ENCODE measurements at regions of chr20 and their contacts with region 1.

Region 1: DNA sequence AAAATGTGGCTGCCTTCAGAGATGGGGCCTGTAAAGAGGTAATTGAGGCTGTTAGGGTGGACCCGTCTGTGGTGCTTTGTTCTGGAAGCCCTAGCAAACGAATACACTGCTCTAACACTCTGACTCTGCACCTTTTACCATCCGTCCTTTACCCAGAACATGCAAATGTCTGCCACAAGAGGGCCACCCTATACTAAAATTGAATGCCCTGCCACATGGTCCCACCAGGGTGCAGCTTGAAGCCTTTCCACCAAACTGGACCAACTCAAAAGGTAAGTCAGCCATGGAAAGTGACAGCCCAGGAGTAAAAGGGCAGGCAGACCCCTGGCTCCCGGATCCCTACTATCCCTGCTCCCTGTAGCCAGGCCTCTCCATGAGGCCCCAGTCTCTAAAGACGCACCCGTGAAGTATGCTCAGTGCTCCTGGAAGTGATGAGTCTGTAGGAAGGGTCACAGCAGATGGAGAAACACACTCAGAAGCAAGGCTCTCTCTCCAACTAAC is 5.8 kb upstream of the BFSP1 start:
- DNase-seq: peak; percentile 61
- H3K4me3 Mint-ChIP-seq: no peak overlapping the region
- H3K27ac Mint-ChIP-seq: no peak overlapping the region
- H3K4me1 Mint-ChIP-seq: peaks cover 26% of the 10 kb centered on the region
- H3K27me3 Mint-ChIP-seq: peaks cover 22% of the 10 kb centered on the region

Region 2: DNA sequence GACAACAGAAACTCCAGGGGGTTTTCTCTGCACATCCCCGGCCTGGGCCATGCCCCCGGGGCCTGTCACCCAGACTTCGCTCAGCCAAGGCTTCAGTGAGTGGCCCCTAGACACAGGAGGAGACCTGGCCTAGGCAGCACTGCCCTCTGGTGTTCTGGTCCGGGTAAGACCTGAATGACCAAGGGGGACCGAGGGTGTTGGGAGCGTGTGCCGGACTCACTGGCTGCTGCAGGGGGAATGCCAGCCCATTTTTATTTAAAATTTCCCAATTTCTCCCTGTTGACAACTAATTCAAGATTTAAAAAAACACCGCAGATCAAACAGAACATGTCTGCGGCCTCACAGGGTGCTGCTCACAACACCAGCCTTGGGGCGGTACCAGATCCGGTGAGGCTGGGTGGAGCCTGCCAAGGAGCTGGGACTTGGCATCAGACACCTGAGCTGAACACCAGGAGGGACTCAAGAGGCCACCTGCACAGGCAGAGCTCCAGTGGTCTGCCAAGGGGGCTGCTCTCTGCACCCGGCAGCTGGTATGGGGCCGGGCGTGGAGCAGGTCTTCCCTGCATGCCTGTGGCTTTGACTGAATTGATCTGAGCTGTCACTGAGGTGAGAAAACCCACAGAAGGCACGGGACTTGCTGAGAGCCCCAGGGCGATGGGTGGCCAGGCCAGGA is 80.7 kb after region 1 on chr20:
- intact Hi-C with region 1: loop called (anchors 1 kb)
- DNase-seq: no peak
- H3K4me3 Mint-ChIP-seq: no peak overlapping the region
- H3K27ac Mint-ChIP-seq: no peak overlapping the region
- H3K4me1 Mint-ChIP-seq: no peaks in the 10 kb centered on the region
- H3K27me3 Mint-ChIP-seq: no peaks in the 10 kb centered on the region

Region 3: DNA sequence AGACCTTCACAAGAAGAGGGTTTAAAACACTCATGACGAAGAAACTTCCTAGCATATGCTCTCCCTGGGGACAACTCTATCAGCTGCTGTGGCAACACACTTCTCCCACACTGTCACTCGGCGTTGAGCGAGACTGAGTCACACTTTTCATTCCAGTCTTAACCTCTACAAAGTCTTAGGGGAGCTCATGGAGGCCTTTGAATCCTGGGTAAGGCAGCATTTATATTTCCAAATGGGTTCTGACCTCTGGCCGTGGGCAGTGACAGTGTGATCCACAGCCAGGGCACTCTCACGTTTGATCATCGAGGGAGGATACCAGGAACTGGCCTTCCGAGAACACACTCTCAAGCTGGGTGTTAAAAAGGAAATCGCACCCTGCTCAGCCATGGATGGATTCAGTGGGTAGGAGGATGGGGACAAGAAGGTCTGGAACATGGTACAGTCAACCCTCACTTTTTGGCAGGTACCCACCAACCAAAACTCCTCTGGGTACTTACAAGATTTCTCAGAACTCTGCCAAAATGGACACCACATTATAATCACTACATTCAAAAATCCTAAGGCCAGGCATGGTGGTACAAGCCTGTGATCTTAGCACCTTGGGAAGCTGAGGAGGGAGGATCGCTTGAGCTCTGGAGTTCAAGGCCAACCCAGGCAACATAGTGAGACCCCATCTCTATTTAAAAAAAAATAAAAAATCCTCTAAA is 125.5 kb after region 1 on chr20:
- intact Hi-C with region 1: loop called (anchors 10 kb)
- DNase-seq: no peak
- H3K4me3 Mint-ChIP-seq: no peak overlapping the region
- H3K27ac Mint-ChIP-seq: peak overlapping the region; percentile 61
- H3K4me1 Mint-ChIP-seq: peaks cover 60% of the 10 kb centered on the region
- H3K27me3 Mint-ChIP-seq: no peaks in the 10 kb centered on the region

Measured in activated T-helper 2 cell treated with anti-CD3 and anti-CD28 coated beads, Interferon-gamma antibody, Interleukin-2, Interleukin-4, amounts not matched to agents 10 μg/mL and 5 μg/mL and 100 μg/mL, durations not matched to agents 14 hours and 24 hours and 36 hours (primary cell).